Mammary epithelial cell (primary cell): ENCODE measurements at regions of chr1 and their contacts with region 1.

Region 1: GRCh38 chr1:35490250-35490649 is 67.0 kb downstream of the KIAA0319L start:
- DNase-seq: no peak
- H3K4me3 ChIP-seq: no peak overlapping the region
- H3K27ac ChIP-seq: no peak overlapping the region
- H3K4me1 ChIP-seq: no peaks in the 10 kb centered on the region
- H3K27me3 ChIP-seq: no peaks in the 10 kb centered on the region
- CTCF ChIP-seq: no peak

Region 2: GRCh38 chr1:35532497-35533223 is 42.4 kb after region 1 on chr1:
- CTCF ChIA-PET with region 1: no interaction called
- dilution Hi-C with region 1: loop called (anchors 5 kb)
- in situ Hi-C with region 1: no loop called
- intact Hi-C with region 1: no loop called
- DNase-seq: no peak
- H3K4me3 ChIP-seq: no peak overlapping the region
- H3K27ac ChIP-seq: no peak overlapping the region
- H3K4me1 ChIP-seq: no peaks in the 10 kb centered on the region
- H3K27me3 ChIP-seq: no peaks in the 10 kb centered on the region
- CTCF ChIP-seq: no peak

Region 3: GRCh38 chr1:35544978-35545377 is 54.7 kb after region 1 on chr1:
- CTCF ChIA-PET with region 1: no interaction called
- dilution Hi-C with region 1: no loop called
- in situ Hi-C with region 1: no loop called
- intact Hi-C with region 1: no loop called
- DNase-seq: no peak
- H3K4me3 ChIP-seq: no peak overlapping the region
- H3K27ac ChIP-seq: no peak overlapping the region
- H3K4me1 ChIP-seq: peaks cover under 1% of the 10 kb centered on the region
- H3K27me3 ChIP-seq: no peaks in the 10 kb centered on the region
- CTCF ChIP-seq: peak; percentile 7 to 26